Activated T-helper 1 cell treated with anti-CD3 and anti-CD28 coated beads, Interleukin-12 subunit alpha, Interleukin-12 subunit beta, Interleukin-2, Interleukin-4 antibody, amounts not matched to agents 30 ng/mL and 10 ng/mL and 1 ng/mL, durations not matched to agents 14 hours and 24 hours and 36 hours (primary cell): ENCODE measurements at regions of chr11 and their contacts with region 1.

Region 1: GRCh38 chr11:15118431-15118830 is 3.7 kb downstream of the INSC start:
- DNase-seq: peak; percentile 60
- H3K4me3 Mint-ChIP-seq: no peak overlapping the region
- H3K27ac Mint-ChIP-seq: peak overlapping the region; percentile 72
- H3K4me1 Mint-ChIP-seq: peaks cover 52% of the 10 kb centered on the region
- H3K27me3 Mint-ChIP-seq: peaks cover 17% of the 10 kb centered on the region

Region 2: GRCh38 chr11:14499554-14500180 is 618.8 kb before region 1 on chr11 and contains the start of gene COPB1:
- intact Hi-C with region 1: loop called (anchors 1 kb)
- DNase-seq: peak; percentile 90
- H3K4me3 Mint-ChIP-seq: peak within 1 kb of the TSS; percentile 100
- H3K27ac Mint-ChIP-seq: peak within 1 kb of the TSS; percentile 98
- H3K4me1 Mint-ChIP-seq: peaks cover 49% of the 10 kb centered on the region
- H3K27me3 Mint-ChIP-seq: no peaks in the 10 kb centered on the region
- total RNA-seq, gene COPB1: 94.8 and 101 TPM in 2 replicates

Region 3: DNA sequence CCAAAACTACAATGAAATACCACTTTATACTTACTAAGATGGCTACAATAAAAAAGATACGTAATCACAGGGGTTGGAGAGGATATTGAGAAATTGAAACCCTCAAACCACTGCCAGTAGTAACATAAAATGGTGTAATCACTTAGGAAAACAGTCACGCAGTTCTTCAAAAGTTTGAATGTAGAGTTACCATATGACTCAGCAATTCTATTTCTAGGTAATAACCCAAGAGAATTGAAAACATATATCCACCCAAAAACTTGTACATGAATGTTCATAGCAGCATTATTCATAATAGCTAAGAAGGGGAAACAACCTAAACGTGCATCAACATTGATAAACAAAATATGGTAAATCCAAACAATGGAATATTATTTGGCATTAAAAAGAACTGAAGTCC is 573.8 kb before region 1 on chr11:
- intact Hi-C with region 1: loop called (anchors 2 kb)
- DNase-seq: no peak
- H3K4me3 Mint-ChIP-seq: peak overlapping the region; percentile 45
- H3K27ac Mint-ChIP-seq: peak overlapping the region; percentile 91
- H3K4me1 Mint-ChIP-seq: peaks cover 73% of the 10 kb centered on the region
- H3K27me3 Mint-ChIP-seq: no peaks in the 10 kb centered on the region

Region 4: GRCh38 chr11:15101072-15101709 is 17.2 kb before region 1 on chr11:
- intact Hi-C with region 1: loop called (anchors 2 kb)
- DNase-seq: peak; percentile 41
- H3K4me3 Mint-ChIP-seq: no peak overlapping the region
- H3K27ac Mint-ChIP-seq: no peak overlapping the region
- H3K4me1 Mint-ChIP-seq: peaks cover 9% of the 10 kb centered on the region
- H3K27me3 Mint-ChIP-seq: peaks cover 19% of the 10 kb centered on the region

Region 5: DNA sequence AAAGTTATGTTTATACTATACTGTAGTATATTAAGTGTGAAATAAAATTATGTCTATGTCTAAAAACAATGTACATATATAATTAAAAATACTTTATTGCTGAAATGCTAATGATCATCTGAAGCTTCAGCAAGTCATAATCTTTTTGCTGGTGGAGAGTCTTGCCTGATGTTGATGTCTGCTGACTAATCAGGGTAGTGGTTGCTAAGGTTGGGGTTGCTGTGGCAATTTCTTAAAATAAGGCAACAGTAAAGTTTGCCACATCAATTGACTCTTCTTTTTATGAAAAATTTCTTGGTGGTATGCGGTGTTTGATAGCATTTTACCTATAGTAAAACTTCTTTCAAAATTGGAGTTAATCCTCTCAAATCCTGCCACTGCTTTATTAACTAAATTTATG is 17.7 kb after region 1 on chr11:
- intact Hi-C with region 1: loop called (anchors 1 kb)
- DNase-seq: no peak
- H3K4me3 Mint-ChIP-seq: no peak overlapping the region
- H3K27ac Mint-ChIP-seq: no peak overlapping the region
- H3K4me1 Mint-ChIP-seq: peaks cover 17% of the 10 kb centered on the region
- H3K27me3 Mint-ChIP-seq: peaks cover 33% of the 10 kb centered on the region

Region 6: GRCh38 chr11:15189641-15190365 is 71.4 kb after region 1 on chr11:
- intact Hi-C with region 1: no loop called
- DNase-seq: no peak
- H3K4me3 Mint-ChIP-seq: no peak overlapping the region
- H3K27ac Mint-ChIP-seq: no peak overlapping the region
- H3K4me1 Mint-ChIP-seq: no peaks in the 10 kb centered on the region
- H3K27me3 Mint-ChIP-seq: peaks cover 21% of the 10 kb centered on the region